Posterior vena cava (tissue), 2 donors: ENCODE measurements at regions of chr12 and their contacts with region 1.

Region 1: DNA sequence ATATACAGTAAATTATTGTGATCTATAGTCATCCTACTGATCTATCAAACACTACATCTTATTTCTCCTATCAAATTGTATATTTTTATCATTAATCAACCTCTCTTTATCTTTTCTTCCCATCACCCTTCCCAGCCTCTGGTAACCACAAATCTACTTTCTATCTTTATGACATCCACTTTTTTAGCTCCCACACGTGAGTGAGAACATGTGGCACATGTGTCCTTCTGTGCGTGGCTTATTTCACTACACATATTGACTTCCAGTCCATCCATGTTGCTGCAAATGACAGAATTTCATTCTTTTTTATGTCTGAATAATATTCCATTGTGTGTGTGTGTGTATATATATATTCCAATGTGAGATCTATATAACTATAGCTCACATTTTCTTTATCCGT is 67.8 kb upstream of the TBX5 start:
- DNase-seq: no peak

Region 2: GRCh38 chr12:114166362-114166761 is 307.4 kb before region 1 on chr12:
- intact Hi-C with region 1: loop called in 1 of 2 experiments (anchors 5 kb)
- DNase-seq: no peak